Vagina (tissue), 2 donors: ENCODE measurements at regions of chr4 and their contacts with region 1.

Region 1: DNA sequence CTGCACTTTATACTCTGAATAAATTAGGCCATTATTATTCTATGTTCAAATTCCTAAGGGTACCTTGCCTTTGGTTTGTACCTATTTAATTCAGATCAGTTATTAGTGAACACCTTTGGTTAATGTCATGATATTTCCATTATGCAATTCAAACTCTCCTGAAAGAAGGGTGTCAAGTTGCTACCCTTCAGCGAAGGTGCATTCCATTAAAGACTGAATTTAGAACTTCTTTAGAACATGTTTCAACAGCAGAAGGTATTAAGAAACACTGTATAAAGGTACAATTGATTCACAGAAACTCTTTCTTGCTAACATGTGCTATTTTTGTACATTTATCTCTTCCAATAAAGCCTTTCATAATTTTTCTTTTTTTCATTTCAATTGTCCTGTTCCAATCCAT is 1545.4 kb upstream of the PCDH10 start:
- DNase-seq: no peak
- H3K4me3 ChIP-seq: no peak overlapping the region
- H3K27ac ChIP-seq: no peak overlapping the region
- H3K4me1 ChIP-seq: no peaks in the 10 kb centered on the region
- H3K27me3 ChIP-seq: no peaks in the 10 kb centered on the region
- CTCF ChIP-seq: no peak
- POLR2A ChIP-seq: no peak

Region 2: GRCh38 chr4:129623233-129623875 is 1980.4 kb before region 1 on chr4:
- intact Hi-C with region 1: no loop called
- DNase-seq: no peak
- H3K4me3 ChIP-seq: no peak overlapping the region
- H3K27ac ChIP-seq: no peak overlapping the region
- H3K4me1 ChIP-seq: no peaks in the 10 kb centered on the region
- H3K27me3 ChIP-seq: no peaks in the 10 kb centered on the region
- CTCF ChIP-seq: no peak
- POLR2A ChIP-seq: no peak

Region 3: GRCh38 chr4:132683957-132684356 is 1080.3 kb after region 1 on chr4:
- intact Hi-C with region 1: loop called (anchors 5 kb)
- DNase-seq: no peak
- H3K4me3 ChIP-seq: no peak overlapping the region
- H3K27ac ChIP-seq: no peak overlapping the region
- H3K4me1 ChIP-seq: no peaks in the 10 kb centered on the region
- H3K27me3 ChIP-seq: no peaks in the 10 kb centered on the region
- CTCF ChIP-seq: no peak
- POLR2A ChIP-seq: no peak